Astrocyte of the cerebellum (primary cell): ENCODE measurements at regions of chr4 and their contacts with region 1.

Region 1: DNA sequence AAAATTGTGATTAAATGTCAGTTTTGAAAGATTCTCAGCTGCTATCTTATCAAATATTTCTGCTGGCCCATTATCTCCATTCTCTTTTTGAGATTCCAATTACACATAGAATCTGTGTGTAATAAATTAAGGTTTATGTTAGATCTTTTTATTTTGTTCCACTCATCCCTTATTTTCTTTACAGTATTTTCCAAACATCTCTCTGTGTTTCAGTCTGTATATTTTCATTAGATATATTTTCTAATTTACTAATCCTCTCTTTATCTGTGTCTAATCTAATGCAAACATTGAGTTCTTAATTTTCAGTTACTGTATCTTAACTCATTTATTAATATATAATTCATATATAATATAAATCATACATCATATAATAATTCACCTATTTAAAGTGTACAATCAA is 268.7 kb downstream of the DCHS2 start:
- DNase-seq: no peak
- H3K4me3 ChIP-seq: no peak overlapping the region
- CTCF ChIP-seq: no peak

Region 2: GRCh38 chr4:153940916-153941315 is 282.0 kb before region 1 on chr4:
- in situ Hi-C with region 1: no loop called
- DNase-seq: no peak
- H3K4me3 ChIP-seq: no peak overlapping the region
- CTCF ChIP-seq: no peak

Region 3: DNA sequence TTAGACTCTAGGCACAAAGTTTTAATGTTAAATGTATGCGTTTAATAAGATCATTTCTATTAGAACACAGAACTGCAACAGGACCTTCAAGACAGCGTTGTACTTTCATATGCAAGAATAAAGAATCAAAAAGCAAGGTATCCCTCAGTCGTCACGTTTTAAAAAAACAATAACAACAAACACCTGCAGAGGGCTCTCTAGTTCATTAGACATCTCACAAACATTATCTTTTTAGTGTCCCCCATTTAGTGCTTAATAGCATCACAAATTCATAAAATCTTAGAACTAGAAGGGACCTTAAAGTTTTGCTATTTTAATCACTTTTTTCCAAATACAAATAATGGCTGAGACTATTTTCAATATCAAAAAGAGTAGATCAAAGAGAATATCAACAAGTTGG is 32.1 kb after region 1 on chr4:
- in situ Hi-C with region 1: loop called (anchors 5 kb)
- DNase-seq: no peak
- H3K4me3 ChIP-seq: no peak overlapping the region
- CTCF ChIP-seq: no peak

Region 4: DNA sequence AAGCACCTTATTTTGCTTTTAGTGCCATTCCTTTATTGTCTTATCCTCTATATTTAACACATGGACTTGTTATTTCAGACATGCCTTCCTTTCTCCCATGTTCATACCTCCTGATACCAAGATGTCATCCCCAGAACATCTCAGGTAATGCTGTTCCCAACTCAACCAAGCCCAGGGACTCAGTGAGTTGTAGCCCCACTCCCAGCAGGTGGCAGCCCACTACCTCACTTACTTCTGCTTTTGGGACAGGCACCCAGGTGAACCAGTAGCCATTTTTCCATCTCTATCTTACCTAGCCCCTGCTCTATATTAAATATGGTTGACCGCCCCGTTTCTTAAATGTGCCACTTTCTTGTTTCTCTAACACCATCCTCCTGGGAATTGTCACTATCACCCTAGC is 69.7 kb after region 1 on chr4:
- in situ Hi-C with region 1: no loop called
- DNase-seq: no peak
- H3K4me3 ChIP-seq: no peak overlapping the region
- CTCF ChIP-seq: no peak